Mammary epithelial cell (primary cell): ENCODE measurements at regions of chr2 and their contacts with region 1.

Region 1: DNA sequence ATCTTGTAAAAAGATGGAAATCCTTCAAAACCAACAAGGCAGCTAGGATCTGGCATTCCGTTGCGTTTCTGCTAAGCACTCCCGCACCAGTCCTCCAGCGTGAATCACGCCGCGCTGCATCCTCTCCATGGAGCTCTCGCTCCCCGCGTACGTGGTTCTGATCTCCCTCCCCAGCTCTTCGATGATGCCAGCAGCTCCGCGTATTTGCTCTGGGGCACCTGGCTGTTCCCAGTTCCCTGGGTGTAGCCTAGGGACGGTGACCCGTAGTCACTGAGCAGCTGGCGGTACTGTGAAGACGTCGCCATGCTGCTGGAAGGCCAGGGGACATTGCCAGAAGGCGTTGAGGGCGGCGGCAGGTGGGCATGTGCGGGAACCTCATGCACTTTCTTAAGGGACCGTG is 407.5 kb downstream of the RNF144A start:
- DNase-seq: no peak
- H3K4me3 ChIP-seq: no peak overlapping the region
- H3K27ac ChIP-seq: no peak overlapping the region
- H3K4me1 ChIP-seq: no peaks in the 10 kb centered on the region
- H3K27me3 ChIP-seq: no peaks in the 10 kb centered on the region
- CTCF ChIP-seq: no peak

Region 2: DNA sequence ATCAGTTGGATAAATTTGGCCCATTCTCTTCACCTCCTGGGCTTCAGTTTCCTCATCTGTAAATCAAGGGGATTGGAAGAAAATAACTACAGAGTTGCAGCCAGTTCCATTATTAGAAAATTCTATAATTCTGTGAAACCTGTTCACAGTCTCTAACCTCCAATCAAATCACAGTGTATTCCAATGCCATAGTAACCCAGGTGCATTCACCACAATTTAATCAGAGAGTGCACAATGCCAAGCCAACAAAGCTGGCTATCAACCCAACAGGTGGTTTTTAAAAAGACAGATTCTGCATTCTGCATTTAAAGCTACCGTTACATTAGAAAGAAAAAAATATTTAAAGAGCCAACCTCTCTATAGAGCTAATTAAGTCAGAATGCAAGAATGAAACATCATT is 98.9 kb before region 1 on chr2:
- CTCF ChIA-PET with region 1: no interaction called
- dilution Hi-C with region 1: no loop called
- in situ Hi-C with region 1: no loop called
- intact Hi-C with region 1: no loop called
- DNase-seq: no peak
- H3K4me3 ChIP-seq: no peak overlapping the region
- H3K27ac ChIP-seq: no peak overlapping the region
- H3K4me1 ChIP-seq: peaks cover 7% of the 10 kb centered on the region
- H3K27me3 ChIP-seq: no peaks in the 10 kb centered on the region
- CTCF ChIP-seq: no peak

Region 3: DNA sequence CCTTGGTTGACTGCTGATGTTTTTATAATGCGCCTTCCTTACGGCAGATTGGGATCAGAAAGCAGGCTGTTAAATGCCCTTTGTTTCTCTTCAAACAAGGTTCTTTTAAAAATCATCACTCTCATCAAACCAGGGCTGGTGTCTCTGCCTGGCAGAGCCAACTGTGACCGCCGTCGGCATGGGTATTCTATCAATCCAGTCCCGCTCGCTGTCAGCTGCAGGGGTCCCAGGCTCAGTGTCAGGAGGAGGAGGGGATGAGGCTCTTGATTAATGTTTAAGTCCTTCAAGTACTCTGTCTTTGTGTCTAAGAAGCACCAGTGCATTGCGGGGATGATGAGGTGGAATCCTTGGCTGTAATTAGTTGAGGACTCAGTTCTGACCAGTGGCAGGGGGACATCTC is 59.4 kb before region 1 on chr2:
- CTCF ChIA-PET with region 1: no interaction called
- dilution Hi-C with region 1: loop called (anchors 5 kb)
- in situ Hi-C with region 1: no loop called
- intact Hi-C with region 1: no loop called
- DNase-seq: no peak
- H3K4me3 ChIP-seq: no peak overlapping the region
- H3K27ac ChIP-seq: no peak overlapping the region
- H3K4me1 ChIP-seq: no peaks in the 10 kb centered on the region
- H3K27me3 ChIP-seq: peaks cover 1% of the 10 kb centered on the region
- CTCF ChIP-seq: no peak